Activated CD4-positive, alpha-beta memory T cell treated with anti-CD3 and anti-CD28 coated beads, Interleukin-2, amount 10 ng/mL, durations not matched to agents 7 days and 5 days (primary cell): ENCODE measurements at regions of chr10 and their contacts with region 1.

Region 1: GRCh38 chr10:84429926-84430520 is 101.6 kb downstream of the CCSER2 start:
- DNase-seq: peak; percentile 68
- H3K4me3 Mint-ChIP-seq: no peak overlapping the region
- H3K27ac Mint-ChIP-seq: no peak overlapping the region
- H3K4me1 Mint-ChIP-seq: peaks cover 9% of the 10 kb centered on the region
- H3K27me3 Mint-ChIP-seq: no peaks in the 10 kb centered on the region

Region 2: GRCh38 chr10:84415539-84416244 is 14.3 kb before region 1 on chr10:
- CTCF ChIA-PET with region 1: interaction called, 11 read pairs
- POLR2A ChIA-PET with region 1: no interaction called
- DNase-seq: no peak
- H3K4me3 Mint-ChIP-seq: no peak overlapping the region
- H3K27ac Mint-ChIP-seq: no peak overlapping the region
- H3K4me1 Mint-ChIP-seq: peaks cover 8% of the 10 kb centered on the region
- H3K27me3 Mint-ChIP-seq: no peaks in the 10 kb centered on the region

Region 3: DNA sequence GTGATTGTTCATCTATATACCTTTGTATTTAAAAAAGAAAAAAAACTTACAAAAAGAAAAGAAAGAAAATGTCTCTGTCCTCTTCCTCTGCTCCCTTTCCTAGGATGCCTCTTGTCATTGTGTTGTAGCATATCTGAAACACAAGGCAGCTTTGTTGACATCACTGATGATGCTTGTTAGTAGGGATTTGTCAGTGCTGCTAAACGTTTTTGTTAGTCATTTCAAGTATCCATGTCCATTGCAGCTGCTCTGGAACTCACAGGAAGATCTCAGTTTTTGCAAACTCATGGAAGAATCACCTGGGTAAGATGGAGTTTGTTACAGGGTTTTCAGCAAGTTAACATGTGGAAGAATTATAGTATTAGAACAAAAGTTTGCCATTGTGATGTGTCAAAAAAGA is 22.0 kb after region 1 on chr10:
- CTCF ChIA-PET with region 1: interaction called, 10 read pairs
- POLR2A ChIA-PET with region 1: no interaction called
- DNase-seq: no peak
- H3K4me3 Mint-ChIP-seq: no peak overlapping the region
- H3K27ac Mint-ChIP-seq: no peak overlapping the region
- H3K4me1 Mint-ChIP-seq: no peaks in the 10 kb centered on the region
- H3K27me3 Mint-ChIP-seq: no peaks in the 10 kb centered on the region